Heart right ventricle (tissue), 16 donors: ENCODE measurements at regions of chr11 and their contacts with region 1.

Region 1: GRCh38 chr11:15688351-15688792 is 573.6 kb downstream of the INSC start:
- DNase-seq: peak; percentile 47 to 81
- ATAC-seq: peak; percentile 75 to 94 (median 90)
- H3K4me3 ChIP-seq: no peak overlapping the region
- H3K27ac ChIP-seq: peak overlapping the region in 6 of 10 donors; percentile 33 to 71 (median 65)
- H3K4me1 ChIP-seq: peaks cover 0 to 36% (median 17%) of the 10 kb centered on the region in 9 donors
- H3K27me3 ChIP-seq: peaks cover 0 to 4% (median 0%) of the 10 kb centered on the region in 7 donors
- CTCF ChIP-seq: no peak

Region 2: GRCh38 chr11:15390857-15391256 is 297.5 kb before region 1 on chr11:
- intact Hi-C with region 1: no loop called
- DNase-seq: no peak
- ATAC-seq: no peak
- H3K4me3 ChIP-seq: no peak overlapping the region
- H3K27ac ChIP-seq: no peak overlapping the region
- H3K4me1 ChIP-seq: no peaks in the 10 kb centered on the region
- H3K27me3 ChIP-seq: no peaks in the 10 kb centered on the region
- CTCF ChIP-seq: no peak

Region 3: DNA sequence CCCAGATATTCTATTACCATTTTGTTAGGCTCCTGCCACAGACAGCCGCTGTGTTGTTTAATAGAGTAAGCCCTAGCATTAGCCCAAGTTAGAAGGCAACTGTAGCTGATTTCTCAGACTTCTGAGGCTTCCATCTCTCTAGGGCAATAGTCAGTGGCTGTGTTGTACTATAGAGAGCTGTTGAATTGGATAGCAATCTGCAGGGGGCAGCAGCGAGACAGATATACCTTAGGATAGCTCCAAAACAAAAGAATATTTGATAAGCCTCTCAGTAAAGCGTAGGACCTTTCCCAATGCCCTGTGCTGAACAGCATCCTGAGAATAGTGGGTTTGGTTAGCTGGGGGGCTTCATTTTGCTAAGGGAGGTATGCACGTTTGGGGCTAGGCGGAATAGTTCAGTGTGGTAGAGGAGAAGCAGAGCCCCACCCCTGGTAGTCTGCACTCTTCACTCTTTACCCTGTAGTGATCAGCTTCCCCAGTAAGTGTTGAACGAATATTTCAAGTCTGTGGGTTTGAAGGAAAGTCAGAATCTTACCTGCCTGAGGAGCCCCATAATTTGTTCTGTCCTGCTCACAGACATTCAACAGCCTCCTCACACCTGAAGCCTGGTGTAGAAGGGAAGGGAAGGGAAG is 58.6 kb before region 1 on chr11:
- intact Hi-C with region 1: loop called in 1 of 10 experiments (anchors 10 kb)
- DNase-seq: no peak
- ATAC-seq: peak in 1 of 8 donors; percentile 39
- H3K4me3 ChIP-seq: no peak overlapping the region
- H3K27ac ChIP-seq: no peak overlapping the region
- H3K4me1 ChIP-seq: no peaks in the 10 kb centered on the region
- H3K27me3 ChIP-seq: peaks cover 0 to 3% (median 0%) of the 10 kb centered on the region in 7 donors
- CTCF ChIP-seq: peak in 6 of 9 donors; percentile 14 to 43 (median 31)